A673 (cell line): ENCODE measurements at regions of chr18 and their contacts with region 1.

Region 1: DNA sequence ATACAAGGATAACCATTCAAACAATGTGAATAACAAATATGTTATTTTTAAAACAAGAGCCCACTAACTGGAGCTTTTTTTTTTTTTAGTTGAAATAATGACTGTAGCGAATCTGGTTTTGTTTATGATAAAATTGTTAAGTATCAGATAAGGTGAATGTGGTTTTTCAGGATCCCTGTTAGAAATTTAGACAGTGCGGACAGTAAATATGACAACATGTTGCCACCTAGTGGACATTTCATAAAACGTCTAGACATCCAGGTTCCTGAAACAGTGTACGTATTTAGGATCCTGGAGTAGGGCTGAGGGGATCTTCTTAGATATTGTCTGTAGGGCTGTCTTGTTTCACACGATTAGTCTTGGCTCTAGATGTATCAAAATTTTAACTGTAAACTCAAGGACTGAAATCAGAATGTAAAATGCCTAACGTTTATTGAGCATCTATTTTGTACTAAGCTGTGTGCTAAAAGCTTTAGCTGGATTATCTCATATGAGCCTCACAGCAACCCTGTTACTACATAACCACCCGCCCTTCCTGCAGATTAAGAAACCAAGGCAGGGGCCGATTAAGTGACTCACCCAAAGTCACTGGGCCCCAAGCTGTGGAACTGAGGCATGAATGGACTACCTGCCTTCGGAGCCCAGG is 23.9 kb upstream of the CCDC68 start:
- DNase-seq: peak; percentile 75
- H3K4me3 ChIP-seq: no peak overlapping the region
- H3K27ac ChIP-seq: no peak overlapping the region
- H3K4me1 ChIP-seq: no peaks in the 10 kb centered on the region
- H3K27me3 ChIP-seq: no peaks in the 10 kb centered on the region
- CTCF ChIP-seq: peak; percentile 76

Region 2: GRCh38 chr18:54392543-54393023 is 590.6 kb before region 1 on chr18:
- CTCF ChIA-PET with region 1: interaction called, 4 read pairs
- POLR2A ChIA-PET with region 1: no interaction called
- intact Hi-C with region 1: loop called (anchors 2 kb)
- DNase-seq: peak; percentile 82
- H3K4me3 ChIP-seq: no peak overlapping the region
- H3K27ac ChIP-seq: no peak overlapping the region
- H3K4me1 ChIP-seq: peaks cover 15% of the 10 kb centered on the region
- H3K27me3 ChIP-seq: no peaks in the 10 kb centered on the region
- CTCF ChIP-seq: peak; percentile 76

Region 3: GRCh38 chr18:54444319-54444914 is 538.7 kb before region 1 on chr18:
- CTCF ChIA-PET with region 1: interaction called, 3 read pairs
- POLR2A ChIA-PET with region 1: no interaction called
- intact Hi-C with region 1: loop called (anchors 2 kb)
- DNase-seq: peak; percentile 75
- H3K4me3 ChIP-seq: no peak overlapping the region
- H3K27ac ChIP-seq: no peak overlapping the region
- H3K4me1 ChIP-seq: no peaks in the 10 kb centered on the region
- H3K27me3 ChIP-seq: peaks cover 7% of the 10 kb centered on the region
- CTCF ChIP-seq: peak; percentile 83

Region 4: DNA sequence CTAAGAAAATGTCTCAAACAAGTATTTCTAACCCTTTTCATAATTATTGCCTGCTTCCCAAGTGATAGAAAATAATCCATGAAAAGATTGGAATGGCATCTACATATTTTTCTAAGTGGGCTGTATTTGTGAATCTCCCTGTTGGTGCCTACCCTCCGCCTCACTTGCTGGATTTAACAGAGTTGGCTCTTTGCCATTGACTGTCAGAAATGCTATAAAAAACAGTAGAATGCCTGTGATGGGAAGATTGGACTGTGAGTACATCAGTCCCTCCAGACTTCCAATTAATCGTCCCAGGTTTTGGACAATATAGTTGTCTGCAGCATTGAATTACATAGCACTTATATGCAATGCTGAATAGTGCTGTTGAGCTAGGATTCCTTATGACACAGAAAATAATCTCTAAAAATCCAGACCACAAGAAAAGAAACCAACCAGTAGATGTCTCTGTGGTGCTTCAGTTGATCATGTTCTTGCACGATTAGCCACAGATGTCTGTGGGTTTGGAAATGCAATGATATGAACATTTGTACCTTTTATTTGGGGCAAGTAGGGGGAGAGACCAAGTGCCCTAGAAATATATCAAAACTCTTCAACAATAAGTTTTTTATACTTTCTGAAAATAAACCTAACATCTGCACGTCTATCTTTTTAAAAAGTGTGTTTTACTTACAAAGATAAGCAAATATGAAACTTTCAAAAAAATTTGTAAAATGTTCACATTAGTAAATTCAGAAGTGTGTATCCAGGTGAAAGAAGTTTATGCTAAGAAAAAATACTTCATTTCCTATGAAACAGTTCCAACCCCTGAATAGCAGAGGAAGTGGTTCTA is 303.6 kb before region 1 on chr18:
- CTCF ChIA-PET with region 1: interaction called, 3 read pairs
- POLR2A ChIA-PET with region 1: no interaction called
- intact Hi-C with region 1: loop called (anchors 1 kb)
- DNase-seq: peak; percentile 74
- H3K4me3 ChIP-seq: no peak overlapping the region
- H3K27ac ChIP-seq: no peak overlapping the region
- H3K4me1 ChIP-seq: no peaks in the 10 kb centered on the region
- H3K27me3 ChIP-seq: no peaks in the 10 kb centered on the region
- CTCF ChIP-seq: peak; percentile 63

Region 5: DNA sequence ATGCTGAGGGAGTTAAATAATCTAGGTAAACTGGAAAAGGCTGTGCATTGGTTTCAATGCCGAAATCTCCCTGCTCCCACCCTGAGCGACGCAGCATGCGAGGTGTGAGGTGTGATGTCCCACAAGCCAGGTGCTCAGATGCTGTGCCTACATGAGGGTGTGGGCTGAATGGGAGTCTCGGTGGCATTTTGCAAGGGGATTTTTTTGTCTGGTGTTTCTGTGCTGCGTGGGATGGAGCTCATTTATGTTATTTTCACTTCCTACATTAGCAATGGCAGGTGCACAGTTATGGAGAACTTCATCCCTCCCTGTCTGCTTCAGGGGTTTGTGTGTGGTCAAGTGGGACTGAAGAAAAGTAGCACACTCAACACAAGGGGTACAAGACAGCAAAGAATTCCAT is 86.3 kb after region 1 on chr18:
- CTCF ChIA-PET with region 1: no interaction called
- POLR2A ChIA-PET with region 1: no interaction called
- intact Hi-C with region 1: no loop called
- DNase-seq: no peak
- H3K4me3 ChIP-seq: no peak overlapping the region
- H3K27ac ChIP-seq: no peak overlapping the region
- H3K4me1 ChIP-seq: no peaks in the 10 kb centered on the region
- H3K27me3 ChIP-seq: peaks cover 50% of the 10 kb centered on the region
- CTCF ChIP-seq: no peak

Region 6: DNA sequence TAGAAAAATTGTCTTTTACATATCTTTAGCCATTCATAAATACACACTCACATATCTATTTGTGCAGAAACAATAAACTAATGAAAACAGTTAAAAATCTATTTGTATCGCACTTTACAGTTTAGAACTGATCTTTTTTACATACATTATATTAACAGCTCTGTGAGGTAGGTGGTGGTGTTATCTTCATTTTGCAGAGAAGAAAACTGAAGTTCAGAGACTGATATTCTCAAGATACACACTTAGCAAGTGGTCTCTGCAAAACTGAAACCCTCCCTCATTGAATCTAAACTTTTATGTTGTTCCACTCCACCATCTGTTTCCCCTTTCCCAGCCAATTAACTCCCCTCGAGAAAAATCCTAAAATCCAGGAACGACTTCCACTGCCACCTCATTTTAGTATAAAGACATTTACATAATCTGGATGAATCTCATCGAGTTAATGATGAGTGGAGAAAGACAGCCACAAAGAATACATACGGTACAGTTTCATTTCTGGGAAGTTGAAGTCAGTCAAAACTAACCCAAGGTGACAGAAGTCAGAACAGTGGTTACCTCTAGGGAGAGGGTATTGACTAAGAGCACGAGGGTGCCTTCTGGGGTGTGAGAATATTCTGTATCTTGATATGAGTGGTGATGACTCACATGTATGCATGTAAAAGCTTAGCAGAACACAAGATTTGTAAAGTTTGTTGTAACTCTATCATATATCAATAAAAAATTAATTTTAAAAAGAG is 1129.0 kb after region 1 on chr18:
- CTCF ChIA-PET with region 1: no interaction called
- POLR2A ChIA-PET with region 1: no interaction called
- intact Hi-C with region 1: no loop called
- DNase-seq: no peak
- H3K4me3 ChIP-seq: no peak overlapping the region
- H3K27ac ChIP-seq: no peak overlapping the region
- H3K4me1 ChIP-seq: no peaks in the 10 kb centered on the region
- H3K27me3 ChIP-seq: peaks cover 9% of the 10 kb centered on the region
- CTCF ChIP-seq: no peak